Activated CD8-positive, alpha-beta memory T cell treated with anti-CD3 and anti-CD28 coated beads, Interleukin-2, amount 10 ng/mL, durations not matched to agents 7 days and 5 days (primary cell): ENCODE measurements at regions of chr14 and their contacts with region 1.

Region 1: DNA sequence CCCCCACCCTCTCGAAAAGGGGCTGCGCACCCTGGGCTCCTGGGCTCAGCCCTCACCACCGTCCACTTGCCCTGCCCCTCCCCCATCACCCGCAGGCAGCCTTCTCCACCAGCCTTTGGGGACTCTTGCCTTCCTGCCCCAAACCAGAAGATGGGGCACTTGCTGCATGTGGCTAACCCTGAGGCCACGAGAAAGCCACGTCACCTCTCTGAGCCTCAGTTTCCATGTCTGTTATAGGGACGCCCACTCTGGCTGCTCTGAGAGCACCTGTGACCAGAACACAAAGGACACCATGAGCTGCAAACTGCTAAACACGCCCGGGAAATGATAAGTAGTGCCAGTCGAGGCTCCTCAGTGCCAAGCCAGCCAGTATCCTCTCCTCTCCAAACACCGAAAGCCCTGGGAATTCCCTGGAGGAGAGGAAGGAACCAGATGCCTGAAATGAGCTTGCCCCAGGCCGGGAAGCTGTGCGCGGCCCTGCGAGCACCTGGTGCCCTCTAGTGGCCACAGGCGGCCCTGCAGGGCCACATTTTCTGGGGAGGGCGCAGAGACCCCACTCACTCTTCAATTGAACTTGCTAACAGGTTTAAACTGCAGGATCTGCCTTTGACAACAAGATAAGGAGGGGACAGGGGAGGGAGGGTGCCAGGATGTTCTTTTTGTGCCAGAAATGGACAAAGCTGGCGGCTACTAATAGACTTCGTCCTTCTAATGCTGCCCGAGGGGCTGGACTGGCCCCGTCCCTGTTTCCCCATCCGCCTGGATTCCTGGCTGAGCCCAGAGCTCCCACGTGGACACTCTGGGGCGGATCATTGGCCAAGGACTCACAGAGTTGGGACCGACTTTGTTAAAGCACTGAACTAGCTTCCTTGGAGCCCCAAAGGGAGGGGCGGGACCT is 10.2 kb upstream of the SERPINA9 start:
- DNase-seq: no peak
- ATAC-seq: peak; percentile 53
- H3K4me3 Mint-ChIP-seq: no peak overlapping the region
- H3K27ac Mint-ChIP-seq: no peak overlapping the region
- H3K4me1 Mint-ChIP-seq: no peaks in the 10 kb centered on the region
- H3K27me3 Mint-ChIP-seq: peaks cover 4% of the 10 kb centered on the region

Region 2: DNA sequence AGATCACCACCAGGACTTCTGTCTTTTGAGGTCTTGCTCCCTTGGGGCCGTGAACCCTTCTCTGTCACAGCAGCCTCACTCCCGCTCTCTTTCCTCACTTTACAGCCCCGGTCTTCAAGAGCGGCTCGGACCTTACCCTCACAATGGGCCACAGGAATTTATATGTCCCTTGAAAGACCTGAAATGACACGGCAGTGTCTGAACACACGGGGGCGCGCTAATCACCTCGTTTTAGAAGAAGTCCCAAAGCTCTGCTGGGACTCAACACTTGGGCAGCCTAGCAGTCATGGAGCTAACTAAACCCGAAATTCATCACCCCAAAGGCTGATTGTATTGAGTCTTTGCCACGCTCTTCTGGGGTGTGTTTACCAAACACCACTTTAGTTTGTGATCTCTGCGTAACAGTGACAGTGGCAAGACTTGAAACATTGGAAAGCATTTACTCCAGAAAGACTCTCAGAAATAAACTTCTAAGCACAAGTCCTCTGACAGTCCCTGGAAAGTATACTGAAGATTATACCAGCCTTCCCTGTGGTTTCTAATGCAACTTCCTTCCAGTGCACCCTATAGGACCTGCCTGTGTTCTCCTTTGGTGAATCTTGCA is 62.6 kb before region 1 on chr14:
- CTCF ChIA-PET with region 1: interaction called, 20 read pairs
- DNase-seq: peak; percentile 60
- ATAC-seq: no peak
- H3K4me3 Mint-ChIP-seq: no peak overlapping the region
- H3K27ac Mint-ChIP-seq: no peak overlapping the region
- H3K4me1 Mint-ChIP-seq: peaks cover 2% of the 10 kb centered on the region
- H3K27me3 Mint-ChIP-seq: peaks cover 25% of the 10 kb centered on the region

Region 3: DNA sequence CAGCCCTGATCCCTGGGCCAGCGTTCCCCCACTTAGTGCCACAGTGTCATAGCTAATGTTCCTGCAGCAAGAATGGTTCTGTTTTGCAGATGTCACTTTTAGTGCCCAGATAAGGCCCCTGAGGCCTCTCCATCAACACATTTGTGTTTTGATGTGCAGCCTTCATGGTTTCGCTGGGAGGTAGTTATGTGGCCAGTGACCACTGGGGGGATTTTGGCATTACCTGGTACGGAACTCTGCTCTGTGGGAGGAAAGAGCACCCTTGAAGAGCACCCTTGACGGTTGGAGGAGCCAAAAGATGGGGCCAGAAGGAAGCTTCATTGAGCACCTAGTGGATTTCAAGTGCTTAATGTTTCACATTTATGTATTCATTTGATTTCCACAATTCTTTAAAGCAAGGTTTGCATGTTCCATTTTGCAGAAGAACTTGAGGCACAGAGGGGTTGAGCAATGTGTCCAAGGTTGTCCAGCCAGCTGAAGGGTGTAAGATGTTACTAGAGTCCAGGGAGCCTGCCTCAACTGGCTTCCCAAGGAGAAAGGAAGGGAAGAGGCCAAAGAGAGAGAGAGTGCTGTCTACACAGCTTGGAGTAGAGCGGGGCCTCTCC is 46.6 kb before region 1 on chr14:
- CTCF ChIA-PET with region 1: interaction called, 31 read pairs
- DNase-seq: no peak
- ATAC-seq: no peak
- H3K4me3 Mint-ChIP-seq: no peak overlapping the region
- H3K27ac Mint-ChIP-seq: no peak overlapping the region
- H3K4me1 Mint-ChIP-seq: no peaks in the 10 kb centered on the region
- H3K27me3 Mint-ChIP-seq: no peaks in the 10 kb centered on the region

Region 4: GRCh38 chr14:94466706-94467370 is 19.4 kb before region 1 on chr14:
- CTCF ChIA-PET with region 1: interaction called, 12 read pairs
- DNase-seq: no peak
- ATAC-seq: no peak
- H3K4me3 Mint-ChIP-seq: no peak overlapping the region
- H3K27ac Mint-ChIP-seq: no peak overlapping the region
- H3K4me1 Mint-ChIP-seq: no peaks in the 10 kb centered on the region
- H3K27me3 Mint-ChIP-seq: peaks cover 3% of the 10 kb centered on the region

Region 5: GRCh38 chr14:94476023-94476422 is 10.2 kb before region 1 on chr14 and contains the start of gene SERPINA9:
- CTCF ChIA-PET with region 1: interaction called, 13 read pairs
- DNase-seq: no peak
- ATAC-seq: no peak
- H3K4me3 Mint-ChIP-seq: no peak within 1 kb of the TSS
- H3K27ac Mint-ChIP-seq: no peak within 1 kb of the TSS
- H3K4me1 Mint-ChIP-seq: no peaks in the 10 kb centered on the region
- H3K27me3 Mint-ChIP-seq: no peaks in the 10 kb centered on the region
- total RNA-seq, gene SERPINA9: not detected